HEK293 (cell line): ENCODE measurements at regions of chr6 and their contacts with region 1.

Region 1: DNA sequence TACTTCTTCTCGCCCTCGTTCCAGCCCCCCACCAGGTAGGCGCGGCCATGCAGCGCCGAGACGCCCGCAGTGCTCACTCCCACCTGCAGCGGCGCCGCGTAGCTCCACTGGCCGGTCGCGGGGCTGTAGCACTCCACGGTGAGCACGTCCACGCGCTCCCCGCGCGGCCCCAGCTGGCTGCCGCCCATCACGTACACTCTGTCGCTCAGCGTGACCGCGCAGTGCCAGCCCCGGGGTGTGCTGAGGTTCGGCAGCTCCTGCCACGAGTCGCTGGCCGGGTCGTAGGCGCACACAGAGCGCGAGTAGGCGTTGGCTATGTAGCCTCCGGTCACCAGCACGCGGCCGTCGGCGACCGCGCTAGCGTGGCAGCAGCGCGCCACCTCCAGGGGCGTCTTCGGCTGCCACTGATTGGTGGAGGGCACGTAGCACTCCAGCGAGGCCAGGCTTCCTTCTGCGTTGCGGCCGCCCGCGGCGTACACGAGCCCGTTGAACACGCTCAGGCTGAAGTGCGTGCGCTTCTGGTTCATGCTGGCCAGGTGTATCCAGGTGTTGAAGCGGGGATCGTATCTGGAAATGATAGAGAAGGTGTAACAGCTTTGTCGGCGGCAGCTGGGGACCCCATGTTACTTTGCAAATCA is 13.7 kb downstream of the KLHL31 start:
- H3K4me3 ChIP-seq: peak overlapping the region; percentile 66
- H3K27ac ChIP-seq: peak overlapping the region; percentile 56
- H3K4me1 ChIP-seq: no peaks in the 10 kb centered on the region; the same call in 1 of the 2 replicates
- CTCF ChIP-seq: peak; percentile 99

Region 2: GRCh38 chr6:53530346-53530745 is 121.5 kb before region 1 on chr6:
- CTCF ChIA-PET with region 1: interaction called, 14 read pairs
- POLR2A ChIA-PET with region 1: no interaction called
- H3K4me3 ChIP-seq: no peak overlapping the region
- H3K27ac ChIP-seq: no peak overlapping the region
- H3K4me1 ChIP-seq: peaks cover 43% of the 10 kb centered on the region
- CTCF ChIP-seq: no peak

Region 3: GRCh38 chr6:53536561-53536960 is 115.3 kb before region 1 on chr6:
- CTCF ChIA-PET with region 1: interaction called, 14 read pairs
- POLR2A ChIA-PET with region 1: no interaction called
- H3K4me3 ChIP-seq: no peak overlapping the region
- H3K27ac ChIP-seq: no peak overlapping the region
- H3K4me1 ChIP-seq: peaks cover 5% of the 10 kb centered on the region
- CTCF ChIP-seq: no peak

Region 4: GRCh38 chr6:53544470-53545308 is 107.2 kb before region 1 on chr6 and contains the start of gene GCLC:
- CTCF ChIA-PET with region 1: interaction called, 25 read pairs
- POLR2A ChIA-PET with region 1: interaction called, 15 read pairs
- H3K4me3 ChIP-seq: peak within 1 kb of the TSS; percentile 91
- H3K27ac ChIP-seq: peak within 1 kb of the TSS; percentile 80
- H3K4me1 ChIP-seq: peaks cover 10% of the 10 kb centered on the region; the same call in 1 of the 2 replicates
- CTCF ChIP-seq: peak; percentile 87

Region 5: GRCh38 chr6:53603386-53604116 is 48.3 kb before region 1 on chr6:
- CTCF ChIA-PET with region 1: no interaction called
- POLR2A ChIA-PET with region 1: no interaction called
- H3K4me3 ChIP-seq: no peak overlapping the region
- H3K27ac ChIP-seq: no peak overlapping the region
- H3K4me1 ChIP-seq: peaks cover 5% of the 10 kb centered on the region; the same call in 1 of the 2 replicates
- CTCF ChIP-seq: no peak

Region 6: GRCh38 chr6:53634184-53634631 is 17.7 kb before region 1 on chr6:
- CTCF ChIA-PET with region 1: interaction called, 12 read pairs
- POLR2A ChIA-PET with region 1: no interaction called
- H3K4me3 ChIP-seq: no peak overlapping the region
- H3K27ac ChIP-seq: no peak overlapping the region
- H3K4me1 ChIP-seq: peaks cover 4% of the 10 kb centered on the region; the same call in 1 of the 2 replicates
- CTCF ChIP-seq: no peak

Region 7: DNA sequence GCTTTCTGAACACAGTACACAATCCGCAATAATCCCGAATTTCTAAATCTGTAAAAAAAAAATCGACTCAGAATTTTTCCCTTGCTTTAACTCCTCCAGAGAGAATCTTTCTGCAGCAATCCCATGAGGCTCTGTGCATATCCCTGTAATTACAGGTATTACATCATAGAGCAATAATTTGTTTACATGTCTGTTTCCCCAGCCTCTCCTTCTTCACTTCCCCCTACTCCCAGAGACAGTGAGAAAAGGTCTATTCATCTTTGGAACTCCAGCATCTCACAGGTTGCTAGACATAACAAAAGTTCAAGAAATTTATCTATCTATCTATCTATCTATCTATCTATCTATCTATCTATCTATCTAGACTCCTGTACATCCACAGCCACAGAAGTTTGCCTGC is 12.4 kb before region 1 on chr6:
- CTCF ChIA-PET with region 1: interaction called, 12 read pairs
- POLR2A ChIA-PET with region 1: no interaction called
- H3K4me3 ChIP-seq: no peak overlapping the region
- H3K27ac ChIP-seq: no peak overlapping the region
- H3K4me1 ChIP-seq: peaks cover 4% of the 10 kb centered on the region; the same call in 1 of the 2 replicates
- CTCF ChIP-seq: no peak